Left ventricle myocardium superior (tissue), 1 donor: ENCODE measurements at regions of chr6 and their contacts with region 1.

Region 1: DNA sequence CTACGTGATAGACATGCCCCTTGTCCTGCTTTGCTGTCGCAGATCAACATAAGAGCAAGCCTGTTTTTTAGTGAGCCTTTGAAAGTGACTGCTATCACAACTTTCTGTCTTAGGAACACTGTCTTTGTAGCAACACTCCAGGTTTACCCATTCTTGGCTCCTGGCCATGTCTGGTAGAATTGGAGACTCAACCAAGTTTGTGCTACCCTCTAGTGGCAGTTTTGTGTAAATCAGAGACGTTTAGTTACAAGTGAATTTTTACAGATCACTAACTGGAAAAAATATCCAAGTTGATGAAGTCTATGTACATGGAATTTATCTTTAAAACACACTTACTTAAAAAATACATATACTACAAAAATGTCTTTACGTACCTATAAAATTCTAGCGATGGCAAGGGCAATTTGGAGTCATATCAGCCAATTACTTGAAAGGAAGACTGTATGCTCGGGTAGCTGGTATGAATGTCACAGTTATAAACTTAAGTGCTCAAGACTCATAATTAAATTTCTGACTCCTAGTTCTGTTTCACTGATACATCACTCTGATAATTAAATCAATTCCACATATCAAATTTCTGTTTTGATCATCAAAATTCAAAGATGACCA is 101.4 kb downstream of the ADGB start:
- DNase-seq: no peak
- ATAC-seq: peak; percentile 68

Region 2: DNA sequence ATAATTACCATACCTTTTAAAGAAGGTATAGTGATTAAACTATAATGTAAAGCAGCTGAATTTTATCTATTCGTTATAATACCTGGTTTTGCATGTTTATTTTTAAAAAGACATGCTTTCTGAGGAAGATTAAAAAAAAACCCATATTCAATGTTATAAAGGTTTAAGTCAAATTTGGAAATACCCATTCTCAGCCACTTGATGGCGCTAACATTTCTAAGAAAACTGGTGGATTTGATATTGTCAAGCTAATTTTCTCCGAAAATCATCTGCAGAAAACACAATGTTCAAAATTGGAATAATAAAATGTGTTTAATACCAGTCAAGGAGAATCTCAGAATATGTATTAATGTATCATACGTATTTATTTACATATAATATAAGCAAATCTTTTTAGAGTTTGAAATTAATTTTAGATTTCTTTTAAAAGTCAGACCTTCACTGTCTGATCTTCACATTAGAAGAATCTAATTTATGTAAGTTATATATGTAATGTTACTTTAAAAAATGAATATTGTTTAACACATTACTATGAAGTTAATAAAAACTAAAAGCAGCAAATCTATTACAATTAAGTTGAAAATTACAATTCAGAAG is 771.0 kb before region 1 on chr6:
- intact Hi-C with region 1: loop called (anchors 10 kb)
- DNase-seq: no peak
- ATAC-seq: no peak

Region 3: GRCh38 chr6:146602526-146602925 is 97.7 kb before region 1 on chr6:
- intact Hi-C with region 1: no loop called
- DNase-seq: no peak
- ATAC-seq: no peak